Activated CD8-positive, alpha-beta memory T cell treated with anti-CD3 and anti-CD28 coated beads, Interleukin-2, amount 10 ng/mL, durations not matched to agents 7 days and 5 days (primary cell): ENCODE measurements at regions of chr2 and their contacts with region 1.

Region 1: GRCh38 chr2:11688222-11689069 is 18.5 kb upstream of the NTSR2 start:
- DNase-seq: peak; percentile 90
- ATAC-seq: peak; percentile 95
- H3K4me3 Mint-ChIP-seq: peak overlapping the region; percentile 43
- H3K27ac Mint-ChIP-seq: no peak overlapping the region
- H3K4me1 Mint-ChIP-seq: peaks cover 14% of the 10 kb centered on the region
- H3K27me3 Mint-ChIP-seq: peaks cover 19% of the 10 kb centered on the region

Region 2: GRCh38 chr2:11573418-11574175 is 114.8 kb before region 1 on chr2:
- CTCF ChIA-PET with region 1: no interaction called
- DNase-seq: no peak
- ATAC-seq: no peak
- H3K4me3 Mint-ChIP-seq: no peak overlapping the region
- H3K27ac Mint-ChIP-seq: no peak overlapping the region
- H3K4me1 Mint-ChIP-seq: no peaks in the 10 kb centered on the region
- H3K27me3 Mint-ChIP-seq: peaks cover 7% of the 10 kb centered on the region

Region 3: DNA sequence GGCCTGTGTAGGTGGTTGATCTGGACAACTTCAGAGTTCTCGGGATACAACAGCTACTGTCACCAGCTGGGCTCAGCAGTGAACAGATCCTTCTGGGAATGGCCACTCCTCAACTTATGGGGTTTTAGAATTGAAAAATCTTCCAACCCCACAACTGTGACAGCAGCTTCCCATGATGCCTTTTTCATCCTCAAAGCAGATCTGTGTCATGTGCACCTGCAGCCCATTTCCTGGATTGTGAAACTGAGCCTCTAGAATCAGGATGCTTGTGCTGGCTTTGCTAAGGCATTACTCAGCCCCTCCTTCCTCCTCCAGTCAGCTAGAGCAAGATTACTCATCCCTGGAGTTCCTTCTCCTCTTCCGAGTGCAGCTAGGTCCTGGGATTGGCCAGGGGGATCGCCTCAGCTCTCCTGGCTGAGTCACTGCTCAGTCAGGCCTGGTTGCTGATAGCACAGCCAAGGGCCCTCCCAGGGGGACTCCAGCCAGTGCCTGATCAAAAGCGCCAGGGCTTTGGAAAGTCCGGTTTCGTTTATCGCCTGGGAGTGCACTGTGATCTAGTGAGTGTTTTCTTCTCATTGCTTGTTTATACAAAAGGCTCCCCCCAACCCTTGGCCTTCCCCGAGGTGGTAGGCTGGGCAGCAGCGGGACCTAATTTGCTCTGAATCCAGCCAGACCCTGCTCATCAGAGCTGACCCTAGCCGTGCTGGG is 55.6 kb after region 1 on chr2:
- CTCF ChIA-PET with region 1: interaction called, 60 read pairs
- DNase-seq: peak; percentile 87
- ATAC-seq: peak; percentile 66
- H3K4me3 Mint-ChIP-seq: peak overlapping the region; percentile 36
- H3K27ac Mint-ChIP-seq: peak overlapping the region; percentile 74
- H3K4me1 Mint-ChIP-seq: peaks cover 46% of the 10 kb centered on the region
- H3K27me3 Mint-ChIP-seq: no peaks in the 10 kb centered on the region

Region 4: DNA sequence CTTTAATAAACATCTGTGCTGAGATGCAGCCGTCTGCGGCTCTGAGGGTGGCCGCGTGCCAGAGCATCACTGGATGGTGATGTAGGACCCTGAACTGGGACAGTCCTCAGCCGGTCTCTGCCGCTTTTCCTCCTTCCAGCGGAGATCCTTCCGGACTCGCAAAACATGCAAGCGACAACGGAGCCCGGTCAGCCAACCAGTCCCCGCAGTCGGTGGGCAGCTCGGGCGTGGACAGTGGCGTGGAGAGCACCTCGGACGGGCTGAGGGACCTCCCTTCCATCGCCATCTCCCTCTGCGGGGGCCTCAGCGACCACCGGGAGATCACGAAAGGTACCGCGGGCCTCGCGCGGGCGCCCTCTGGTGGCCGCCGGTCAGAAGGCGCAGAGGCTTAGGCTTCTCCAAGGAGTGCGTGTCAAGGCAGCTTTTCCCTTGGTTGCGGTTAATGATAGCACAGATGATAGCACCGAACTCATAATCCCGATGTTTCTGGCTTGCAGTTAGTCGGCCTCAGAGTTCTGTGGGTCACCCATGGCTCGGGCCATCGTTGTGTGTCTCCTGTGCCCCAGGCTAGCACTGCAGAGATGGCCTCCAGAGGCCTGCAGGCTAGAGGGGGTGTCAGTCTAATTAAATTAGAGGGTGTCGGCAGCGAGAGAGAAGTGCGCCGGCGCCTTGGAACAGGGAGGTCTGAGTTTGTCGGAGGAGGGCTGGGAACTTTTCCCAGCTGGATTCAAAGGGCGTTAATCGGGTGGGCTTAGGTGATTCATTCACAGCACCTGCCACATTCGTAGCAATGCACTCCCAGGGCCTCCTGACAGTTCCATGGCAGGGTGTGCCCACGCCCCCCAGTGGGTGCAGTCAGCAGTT is 96.5 kb after region 1 on chr2:
- CTCF ChIA-PET with region 1: interaction called, 101 read pairs
- DNase-seq: peak; percentile 49
- ATAC-seq: peak; percentile 63
- H3K4me3 Mint-ChIP-seq: no peak overlapping the region
- H3K27ac Mint-ChIP-seq: no peak overlapping the region
- H3K4me1 Mint-ChIP-seq: no peaks in the 10 kb centered on the region
- H3K27me3 Mint-ChIP-seq: no peaks in the 10 kb centered on the region